B cell (primary cell): ENCODE measurements at regions of chr9 and their contacts with region 1.

Region 1: DNA sequence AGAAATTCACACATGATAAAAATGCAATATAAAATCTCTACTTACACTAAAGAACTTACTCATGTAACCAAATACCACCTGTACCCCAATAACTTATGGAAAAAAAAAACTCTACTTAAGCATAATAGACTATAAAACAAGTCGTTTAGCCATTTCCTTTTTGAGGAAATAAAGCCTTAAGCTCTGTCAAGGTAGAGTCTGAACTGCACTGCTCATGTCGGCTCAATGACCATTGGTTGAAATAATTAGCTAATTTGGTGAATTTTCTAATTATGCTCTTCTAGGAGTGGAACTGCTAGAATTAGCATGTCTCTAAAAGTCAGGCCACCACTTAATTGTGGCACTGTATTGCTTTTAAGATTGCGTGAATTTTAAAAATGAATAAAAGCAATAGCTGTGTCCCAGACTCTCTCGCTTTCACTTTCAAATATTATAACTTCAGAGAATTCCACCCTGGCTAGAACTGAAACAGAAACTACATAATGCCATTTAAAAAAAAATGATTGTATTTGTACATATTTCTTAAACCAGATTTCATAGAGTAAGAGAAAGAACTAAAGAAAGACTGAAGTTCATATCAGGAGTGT is 113.0 kb upstream of the PCA3 start:
- DNase-seq: peak; percentile 35
- ATAC-seq: peak; percentile 41
- H3K4me3 ChIP-seq: peak overlapping the region; percentile 32 to 68 (median 47)
- H3K4me3 Mint-ChIP-seq: peak overlapping the region; percentile 85
- H3K27ac ChIP-seq: peak overlapping the region in 1 of 2 donors; percentile 43
- H3K27ac Mint-ChIP-seq: peak overlapping the region; percentile 8
- H3K4me1 ChIP-seq: peaks cover 23 to 31% of the 10 kb centered on the region in 2 donors
- H3K4me1 Mint-ChIP-seq: peaks cover 38% of the 10 kb centered on the region
- H3K27me3 ChIP-seq: no peaks in the 10 kb centered on the region
- H3K27me3 Mint-ChIP-seq: no peaks in the 10 kb centered on the region
- CTCF ChIP-seq: no peak

Region 2: GRCh38 chr9:76571288-76571687 is 79.9 kb before region 1 on chr9:
- CTCF ChIA-PET with region 1: interaction called, 3 read pairs
- POLR2A ChIA-PET with region 1: no interaction called
- intact Hi-C with region 1: loop called (anchors 5 kb)
- DNase-seq: peak; percentile 45
- ATAC-seq: peak; percentile 51
- H3K4me3 ChIP-seq: peak overlapping the region; percentile 25 to 75 (median 60)
- H3K4me3 Mint-ChIP-seq: peak overlapping the region; percentile 83
- H3K27ac ChIP-seq: peak overlapping the region in 1 of 2 donors; percentile 51
- H3K27ac Mint-ChIP-seq: peak overlapping the region; percentile 56
- H3K4me1 ChIP-seq: peaks cover 20 to 29% of the 10 kb centered on the region in 2 donors
- H3K4me1 Mint-ChIP-seq: peaks cover 36% of the 10 kb centered on the region
- H3K27me3 ChIP-seq: no peaks in the 10 kb centered on the region
- H3K27me3 Mint-ChIP-seq: no peaks in the 10 kb centered on the region
- CTCF ChIP-seq: no peak